ENCODE measurements at regions of chr3 and their contacts with region 1.

Region 1: DNA sequence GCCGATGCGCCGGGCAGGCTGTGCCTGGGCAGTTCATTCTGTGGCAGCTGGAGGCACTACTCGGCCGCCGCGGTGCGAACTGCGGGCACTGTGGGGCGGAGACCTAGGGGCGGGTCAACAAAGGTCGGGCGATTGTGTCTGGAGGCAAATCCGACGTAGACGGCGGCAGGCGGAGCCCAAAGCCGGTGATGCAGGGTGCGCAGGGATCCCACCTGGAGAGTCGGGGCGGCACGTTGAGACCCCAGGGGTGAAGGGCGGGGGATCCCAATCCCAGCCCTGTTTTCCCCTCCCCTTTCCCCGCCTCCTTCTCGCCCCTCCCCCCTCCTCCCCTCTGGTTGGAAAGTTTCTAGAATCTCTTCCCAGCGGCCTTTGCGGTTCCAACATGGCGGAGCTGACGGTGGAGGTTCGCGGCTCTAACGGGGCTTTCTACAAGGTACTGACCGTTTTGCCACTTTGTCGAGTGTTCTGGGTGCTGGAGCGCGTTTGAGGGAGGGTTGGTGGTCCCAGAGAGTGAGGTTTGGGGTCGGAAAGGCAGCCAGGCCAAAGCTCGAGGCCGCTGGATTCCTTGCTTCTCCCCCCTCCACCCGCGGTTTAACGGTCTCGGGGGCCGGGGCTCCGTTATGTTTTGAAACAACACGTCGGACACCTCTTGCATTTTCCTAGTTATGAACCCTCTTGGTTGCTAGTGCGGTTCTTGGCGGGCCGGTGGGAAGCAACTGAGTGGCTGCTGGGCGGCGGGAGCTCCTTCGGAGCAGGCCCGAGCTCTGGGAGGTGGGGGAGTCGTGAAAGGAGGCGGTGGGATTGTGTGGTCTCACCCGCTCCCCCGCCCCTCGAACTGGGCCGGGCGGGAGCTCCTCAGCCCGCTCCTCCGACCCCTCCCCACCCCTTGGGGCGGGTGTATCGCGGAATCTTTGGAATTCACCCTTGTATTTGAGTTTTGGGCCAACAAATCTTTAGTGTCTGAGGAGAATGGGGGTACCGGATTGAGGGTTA is at the start of gene FXR1:
- DNase-seq: peak; percentile 94
- H3K4me3 Mint-ChIP-seq: peak within 1 kb of the TSS; percentile 87
- H3K27ac Mint-ChIP-seq: peak within 1 kb of the TSS; percentile 95
- H3K4me1 Mint-ChIP-seq: peaks cover 25% of the 10 kb centered on the region
- H3K27me3 Mint-ChIP-seq: no peaks in the 10 kb centered on the region
- CTCF ChIP-seq: peak; percentile 37
- total RNA-seq, gene FXR1: 166 and 194 TPM in 2 replicates

Region 2: DNA sequence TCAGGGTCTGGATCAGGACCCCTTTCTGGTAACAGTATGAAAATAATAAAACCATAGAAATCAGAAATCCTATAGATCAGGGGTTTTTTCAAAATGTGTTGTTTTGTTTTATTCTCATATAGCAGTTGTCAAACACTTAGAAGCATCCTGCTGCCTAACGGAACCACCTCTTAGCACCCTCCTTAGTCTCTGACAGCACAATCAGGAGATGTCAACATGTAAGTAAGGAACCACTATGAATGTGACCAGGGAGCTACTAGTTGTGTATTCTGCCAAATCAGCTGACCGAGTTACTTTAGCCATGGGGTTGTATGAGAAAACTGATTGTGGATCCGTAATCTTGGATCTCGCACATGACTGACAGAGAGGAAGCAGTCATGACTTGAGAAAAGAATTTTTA is 255.5 kb before region 1 on chr3:
- CTCF ChIA-PET with region 1: no interaction called
- POLR2A ChIA-PET with region 1: no interaction called
- intact Hi-C with region 1: no loop called
- DNase-seq: no peak
- H3K4me3 Mint-ChIP-seq: no peak overlapping the region
- H3K27ac Mint-ChIP-seq: no peak overlapping the region
- H3K4me1 Mint-ChIP-seq: peaks cover 5% of the 10 kb centered on the region
- H3K27me3 Mint-ChIP-seq: no peaks in the 10 kb centered on the region
- CTCF ChIP-seq: no peak

Region 3: GRCh38 chr3:180683816-180684215 is 228.8 kb before region 1 on chr3:
- CTCF ChIA-PET with region 1: no interaction called
- POLR2A ChIA-PET with region 1: no interaction called
- intact Hi-C with region 1: no loop called
- DNase-seq: no peak
- H3K4me3 Mint-ChIP-seq: no peak overlapping the region
- H3K27ac Mint-ChIP-seq: no peak overlapping the region
- H3K4me1 Mint-ChIP-seq: peaks cover 6% of the 10 kb centered on the region
- H3K27me3 Mint-ChIP-seq: no peaks in the 10 kb centered on the region
- CTCF ChIP-seq: no peak

Region 4: DNA sequence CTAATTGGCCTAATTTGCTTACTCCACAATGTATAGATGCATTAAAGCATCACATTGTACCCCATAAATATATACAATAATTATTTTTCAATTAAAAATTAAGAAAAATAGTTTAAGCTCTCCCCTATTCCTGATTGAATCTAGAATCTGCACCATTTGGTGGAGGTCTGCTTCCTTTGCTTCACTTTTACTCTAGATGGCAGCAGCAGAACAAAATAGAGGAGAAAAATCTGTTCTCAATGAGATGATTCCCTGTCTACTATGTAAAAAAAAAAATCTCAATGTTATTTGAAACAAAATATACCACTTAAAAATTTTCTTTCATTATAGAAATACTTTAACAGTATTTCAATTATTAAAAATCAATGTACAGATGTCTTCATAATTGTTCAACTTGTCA is 109.8 kb before region 1 on chr3:
- CTCF ChIA-PET with region 1: interaction called, 11 read pairs
- POLR2A ChIA-PET with region 1: interaction called, 10 read pairs
- intact Hi-C with region 1: no loop called
- DNase-seq: peak; percentile 46
- H3K4me3 Mint-ChIP-seq: no peak overlapping the region
- H3K27ac Mint-ChIP-seq: no peak overlapping the region
- H3K4me1 Mint-ChIP-seq: no peaks in the 10 kb centered on the region
- H3K27me3 Mint-ChIP-seq: no peaks in the 10 kb centered on the region
- CTCF ChIP-seq: peak; percentile 48

Region 5: DNA sequence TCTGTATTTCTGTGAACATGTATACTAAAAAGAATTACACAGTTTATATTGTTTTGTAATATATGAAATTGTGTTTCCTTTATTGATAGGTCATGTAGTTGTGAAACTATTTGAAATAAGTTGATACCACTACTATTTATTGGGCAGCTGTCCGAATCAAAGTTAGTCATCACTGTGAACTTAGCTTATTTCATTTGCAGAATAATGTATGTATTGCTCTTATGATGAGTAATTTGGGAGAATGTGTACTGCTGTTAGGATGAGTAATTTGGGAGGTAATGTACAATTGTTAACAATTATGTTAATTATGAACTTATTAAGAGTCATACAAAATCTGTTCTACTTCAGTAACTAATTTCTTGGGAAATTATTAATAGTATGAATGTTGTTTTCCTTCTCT is 22.0 kb after region 1 on chr3:
- CTCF ChIA-PET with region 1: interaction called, 5 read pairs
- POLR2A ChIA-PET with region 1: interaction called, 24 read pairs
- intact Hi-C with region 1: loop called (anchors 2 kb)
- DNase-seq: peak; percentile 26
- H3K4me3 Mint-ChIP-seq: no peak overlapping the region
- H3K27ac Mint-ChIP-seq: no peak overlapping the region
- H3K4me1 Mint-ChIP-seq: peaks cover 15% of the 10 kb centered on the region
- H3K27me3 Mint-ChIP-seq: no peaks in the 10 kb centered on the region
- CTCF ChIP-seq: no peak

Region 6: DNA sequence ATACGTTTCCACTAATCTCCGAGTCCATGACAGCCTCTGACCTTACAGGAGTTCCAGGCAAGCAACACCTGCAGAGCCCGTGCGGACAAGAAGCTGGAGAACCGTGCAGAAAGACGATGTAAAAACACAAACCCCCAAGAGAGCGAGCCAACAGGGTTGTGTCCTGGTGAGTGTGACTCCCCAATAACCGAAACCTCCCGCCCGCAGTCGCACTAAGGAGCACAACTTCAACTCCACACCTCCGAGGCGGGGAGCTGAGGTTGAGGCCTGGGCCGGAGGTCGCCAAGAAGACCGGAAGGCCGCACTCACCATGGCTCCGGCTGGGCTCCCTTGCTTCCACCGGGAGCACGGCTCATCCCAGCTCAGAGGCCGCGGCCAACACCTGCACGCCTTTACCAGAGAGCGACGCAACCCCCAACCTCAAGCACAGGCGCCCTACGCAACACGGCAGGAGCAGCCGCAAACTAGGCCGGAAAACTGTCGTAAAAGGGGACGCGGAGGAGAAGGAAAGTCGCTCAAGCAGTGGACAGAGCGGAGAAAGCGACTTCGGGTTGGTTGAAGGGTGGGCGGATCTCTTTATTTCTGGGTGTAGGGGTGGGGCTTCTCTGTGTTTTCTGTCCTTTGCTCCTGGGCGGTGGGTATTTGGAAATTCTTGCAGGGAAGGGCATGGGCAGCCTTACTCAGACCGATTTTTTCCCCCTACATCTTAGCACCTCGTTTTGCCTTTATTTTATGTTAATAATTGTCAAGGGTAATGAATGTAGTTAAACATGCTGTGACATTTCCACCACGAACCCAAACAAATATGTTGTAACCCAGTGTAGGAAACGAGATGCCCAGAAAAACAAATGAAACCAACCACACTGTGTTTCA is 76.9 kb after region 1 on chr3 and contains the start of gene DNAJC19:
- CTCF ChIA-PET with region 1: interaction called, 3 read pairs
- POLR2A ChIA-PET with region 1: interaction called, 19 read pairs
- intact Hi-C with region 1: no loop called
- DNase-seq: peak; percentile 97
- H3K4me3 Mint-ChIP-seq: peak within 1 kb of the TSS; percentile 99
- H3K27ac Mint-ChIP-seq: peak within 1 kb of the TSS; percentile 95
- H3K4me1 Mint-ChIP-seq: peaks cover 5% of the 10 kb centered on the region
- H3K27me3 Mint-ChIP-seq: no peaks in the 10 kb centered on the region
- CTCF ChIP-seq: no peak
- total RNA-seq, gene DNAJC19: 73.5 and 94.5 TPM in 2 replicates

Measured in MCF 10A (cell line).